ENCODE measurements at regions of chr20 and their contacts with region 1.

Region 1: DNA sequence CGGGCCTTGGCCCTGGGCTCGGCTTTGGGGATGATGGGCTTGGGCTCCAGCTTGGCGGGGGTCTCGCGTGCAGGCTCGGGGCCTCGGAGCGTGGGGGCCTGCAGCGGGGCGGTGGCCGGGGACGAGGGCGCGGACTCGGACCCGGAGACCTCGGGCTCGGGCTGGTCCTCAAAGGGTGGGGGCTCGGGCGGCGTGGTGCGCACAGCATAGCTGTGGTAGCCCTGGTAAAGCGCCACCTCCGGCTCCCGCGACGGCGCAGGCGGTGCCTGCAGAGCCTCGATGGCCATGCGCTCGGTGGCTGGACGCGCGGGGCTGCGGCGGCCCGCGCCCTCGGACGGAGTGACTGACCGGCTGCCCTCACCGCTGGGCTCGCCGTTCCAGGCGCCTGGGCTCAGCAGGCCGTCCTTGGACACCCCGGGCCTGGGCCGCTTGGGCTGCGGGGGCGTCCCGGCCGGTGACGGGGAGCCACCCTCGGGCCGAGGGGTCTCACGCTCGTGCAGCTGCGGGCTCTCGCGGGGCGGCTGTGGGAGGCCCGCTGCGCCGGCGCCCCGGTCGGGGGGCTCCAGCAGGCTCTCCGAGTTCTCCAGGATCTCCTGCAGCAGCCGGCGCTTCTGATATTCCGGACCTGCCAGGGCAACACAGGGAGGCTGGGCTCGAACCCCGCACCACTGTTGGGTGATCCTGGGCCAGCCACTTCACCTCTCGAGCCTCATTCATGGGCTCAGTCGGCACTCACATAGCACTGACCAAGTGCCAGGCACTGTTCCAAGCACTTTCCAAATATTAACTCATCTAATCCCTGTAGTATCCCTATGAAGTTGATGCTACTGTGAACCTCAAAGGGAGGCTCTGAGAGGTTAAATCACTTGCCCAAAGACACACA is 71.0 kb downstream of the JPH2 start:
- H3K4me3 Mint-ChIP-seq: no peak overlapping the region
- H3K27ac Mint-ChIP-seq: no peak overlapping the region
- H3K4me1 Mint-ChIP-seq: no peaks in the 10 kb centered on the region
- H3K27me3 Mint-ChIP-seq: peaks cover 55% of the 10 kb centered on the region

Region 2: GRCh38 chr20:44187051-44187762 is 71.2 kb after region 1 on chr20 and contains the start of gene JPH2:
- intact Hi-C with region 1: loop called (anchors 1 kb)
- H3K4me3 Mint-ChIP-seq: no peak within 1 kb of the TSS
- H3K27ac Mint-ChIP-seq: no peak within 1 kb of the TSS
- H3K4me1 Mint-ChIP-seq: peaks cover 21% of the 10 kb centered on the region
- H3K27me3 Mint-ChIP-seq: peaks cover 52% of the 10 kb centered on the region

Measured in dendritic cell treated with granulocyte-macrophage colony-stimulating factor and Interleukin-4, amounts not matched to agents 40 ng/mL and 50 ng/mL, for 4 days (primary cell).